Cardiac septum (tissue), 1 donor: ENCODE measurements at regions of chr1 and their contacts with region 1.

Region 1: DNA sequence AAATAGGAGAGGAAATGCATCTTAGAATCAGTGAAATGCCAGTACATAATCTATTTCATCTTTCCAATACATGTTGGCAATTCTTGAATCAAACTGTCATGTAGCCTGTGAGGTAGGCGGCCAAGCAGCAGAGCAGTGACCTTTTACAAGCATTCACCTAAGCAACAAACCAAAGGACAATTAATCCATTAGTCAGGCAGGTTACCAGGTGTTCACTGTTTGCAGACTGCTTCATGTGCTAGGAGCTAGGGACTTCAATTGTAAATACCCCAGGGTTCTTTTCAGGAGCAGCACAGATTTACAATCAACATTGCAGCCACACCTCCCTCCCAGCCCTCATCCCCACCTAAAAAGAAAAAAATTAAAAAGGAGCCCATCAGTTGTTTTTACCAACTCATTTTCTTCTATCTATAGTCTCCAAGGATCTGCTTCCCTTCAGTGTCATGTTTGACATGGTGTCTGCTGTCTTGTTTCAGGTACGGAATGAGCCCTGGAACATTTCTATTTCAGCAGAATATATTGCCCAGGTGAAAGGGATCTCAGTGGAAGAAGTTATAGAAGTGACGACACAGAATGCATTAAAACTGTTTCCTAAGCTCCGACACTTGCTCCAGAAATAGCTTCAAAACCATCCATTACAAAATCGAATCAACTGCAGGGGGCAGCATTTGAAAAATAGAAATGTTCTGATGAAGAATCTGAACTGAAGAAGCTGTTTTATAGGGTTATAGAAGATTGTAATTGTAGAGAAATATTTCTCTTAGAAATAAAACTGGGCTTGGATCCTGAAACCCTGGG is 23.0 kb downstream of the TATDN3 start:
- DNase-seq: no peak

Region 2: DNA sequence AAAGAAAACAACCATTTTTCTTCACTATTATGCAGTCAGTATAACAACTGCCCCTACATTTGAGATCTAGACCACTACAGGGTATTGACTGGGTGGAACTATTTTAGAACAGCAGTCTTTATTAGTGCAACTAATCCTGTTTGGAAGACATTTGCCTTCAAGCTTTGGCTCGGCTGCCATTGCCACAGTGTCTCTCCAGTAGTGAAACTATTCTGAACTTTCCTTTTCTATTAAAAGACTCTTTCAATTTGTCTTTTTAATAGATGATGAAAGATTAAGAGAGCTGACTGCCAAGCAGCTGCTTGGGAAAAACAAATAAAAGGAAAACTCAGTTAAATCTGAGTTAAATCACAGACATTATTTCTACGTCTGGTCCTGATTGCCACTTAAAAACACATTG is 1033.5 kb before region 1 on chr1:
- intact Hi-C with region 1: no loop called
- DNase-seq: no peak

Region 3: DNA sequence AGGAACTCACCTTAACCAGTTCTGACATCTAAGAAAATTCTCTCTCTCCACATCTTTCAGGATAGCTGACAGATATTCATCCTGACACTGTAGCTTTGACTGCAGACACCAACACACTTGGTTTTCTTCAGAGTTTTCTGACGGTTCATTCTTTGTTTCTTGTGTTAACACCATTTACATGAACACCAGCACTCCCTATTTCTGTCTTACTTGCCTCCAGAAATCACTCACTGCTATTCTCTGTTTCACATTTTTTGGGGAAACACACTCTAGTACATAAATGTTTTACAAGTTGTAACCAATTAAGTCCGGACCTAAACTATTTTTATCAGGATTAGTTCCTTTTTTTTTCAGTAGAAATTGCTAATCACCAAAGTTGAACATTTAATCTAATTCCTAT is 58.8 kb after region 1 on chr1:
- intact Hi-C with region 1: no loop called
- DNase-seq: no peak

Region 4: GRCh38 chr1:212994926-212995325 is 180.2 kb after region 1 on chr1:
- intact Hi-C with region 1: loop called (anchors 5 kb)
- DNase-seq: no peak